Sciatic nerve (tissue), 2 donors: ENCODE measurements at regions of chr6 and their contacts with region 1.

Region 1: DNA sequence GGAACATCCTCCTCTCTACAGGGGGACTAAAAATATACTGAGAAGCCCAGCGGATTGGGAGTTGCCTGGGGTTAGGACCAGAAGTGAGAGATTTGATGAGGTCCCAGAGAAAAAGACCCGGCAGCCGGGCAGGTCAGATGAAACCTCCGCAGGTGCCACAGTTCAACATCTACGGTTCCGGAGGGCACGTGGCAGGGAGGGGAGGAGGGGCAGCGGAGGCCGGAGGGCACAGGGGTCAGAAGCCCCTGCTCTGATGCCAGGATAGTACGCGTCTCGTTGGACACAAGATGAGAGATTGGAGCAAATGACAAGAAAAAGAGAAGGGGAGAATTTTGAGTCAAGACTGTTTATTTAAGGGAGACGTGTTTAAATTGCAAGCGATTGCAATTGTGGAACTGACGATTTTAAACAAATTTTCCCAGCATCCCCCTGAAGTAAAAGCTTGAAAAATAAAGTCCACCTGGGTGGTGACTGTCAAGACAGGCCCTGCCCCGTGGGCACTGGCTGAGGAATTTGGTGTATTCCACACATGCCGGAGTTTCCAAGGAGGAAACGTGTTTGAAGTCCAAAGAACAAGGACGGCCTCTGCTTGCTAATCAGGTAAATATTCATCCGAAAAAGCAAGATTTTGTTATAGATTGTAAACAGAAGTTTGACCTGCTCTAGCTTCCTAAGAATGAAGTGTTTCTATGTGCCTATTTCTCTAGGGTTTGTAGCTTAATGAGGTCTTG is 505.0 kb downstream of the QKI start:
- DNase-seq: no peak
- ATAC-seq: no peak

Region 2: GRCh38 chr6:163889904-163890514 is 29.5 kb before region 1 on chr6:
- intact Hi-C with region 1: loop called (anchors 1 kb)
- DNase-seq: no peak
- ATAC-seq: no peak

Region 3: DNA sequence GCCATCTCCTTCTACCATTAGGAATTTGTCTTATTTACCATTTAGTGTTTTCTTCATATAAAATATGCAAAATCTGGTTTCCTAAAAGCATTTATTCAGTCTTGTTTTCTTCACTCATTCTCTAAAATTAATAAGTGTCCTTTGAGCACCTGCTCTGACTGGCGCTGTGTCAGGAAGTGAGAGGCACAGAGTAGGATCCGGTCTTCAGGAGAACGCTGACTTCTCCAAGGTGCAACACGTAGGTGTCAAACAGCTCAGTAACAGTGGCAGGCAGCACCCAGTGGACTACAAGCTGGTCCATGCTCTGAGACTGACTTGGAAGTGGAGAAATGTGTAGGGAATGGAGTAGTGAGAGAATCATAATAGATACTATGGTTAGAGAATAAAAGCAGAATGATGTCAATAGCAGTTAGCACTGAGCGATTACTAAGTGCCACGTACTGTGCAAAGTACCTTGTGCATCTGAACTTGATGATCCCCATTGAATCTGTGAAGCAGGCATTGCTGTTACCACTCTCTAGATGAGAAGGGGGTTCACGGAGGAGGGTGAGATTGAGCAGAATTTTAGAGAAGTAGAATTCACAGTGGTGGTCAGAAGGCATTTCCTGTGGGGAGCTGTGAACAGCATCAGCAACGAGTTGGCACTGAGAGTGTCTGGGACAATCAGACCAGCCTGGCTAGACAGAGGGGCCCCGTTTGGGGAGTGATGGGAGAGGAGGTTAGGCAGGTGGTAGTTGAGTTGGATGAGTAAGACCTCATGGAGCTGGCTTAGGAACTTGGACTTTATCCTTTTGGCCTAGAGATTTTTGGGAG is 64.8 kb after region 1 on chr6:
- intact Hi-C with region 1: no loop called
- DNase-seq: no peak
- ATAC-seq: peak; percentile 15